Activated CD4-positive, alpha-beta T cell treated with anti-CD3 and anti-CD28 coated beads, Interleukin-2, amount 10 ng/mL, durations not matched to agents 24 days and 14 days (primary cell): ENCODE measurements at regions of chr17 and their contacts with region 1.

Region 1: GRCh38 chr17:36641877-36642845 is 40.8 kb downstream of the MRM1 start:
- DNase-seq: peak; percentile 67
- H3K4me3 Mint-ChIP-seq: peak overlapping the region; percentile 86
- H3K27ac Mint-ChIP-seq: peak overlapping the region; percentile 45
- H3K4me1 Mint-ChIP-seq: peaks cover 9% of the 10 kb centered on the region
- H3K27me3 Mint-ChIP-seq: peaks cover 81% of the 10 kb centered on the region

Region 2: GRCh38 chr17:36443777-36444176 is 198.4 kb before region 1 on chr17:
- intact Hi-C with region 1: no loop called
- DNase-seq: no peak
- H3K4me3 Mint-ChIP-seq: no peak overlapping the region
- H3K27ac Mint-ChIP-seq: no peak overlapping the region
- H3K4me1 Mint-ChIP-seq: no peaks in the 10 kb centered on the region
- H3K27me3 Mint-ChIP-seq: no peaks in the 10 kb centered on the region

Region 3: DNA sequence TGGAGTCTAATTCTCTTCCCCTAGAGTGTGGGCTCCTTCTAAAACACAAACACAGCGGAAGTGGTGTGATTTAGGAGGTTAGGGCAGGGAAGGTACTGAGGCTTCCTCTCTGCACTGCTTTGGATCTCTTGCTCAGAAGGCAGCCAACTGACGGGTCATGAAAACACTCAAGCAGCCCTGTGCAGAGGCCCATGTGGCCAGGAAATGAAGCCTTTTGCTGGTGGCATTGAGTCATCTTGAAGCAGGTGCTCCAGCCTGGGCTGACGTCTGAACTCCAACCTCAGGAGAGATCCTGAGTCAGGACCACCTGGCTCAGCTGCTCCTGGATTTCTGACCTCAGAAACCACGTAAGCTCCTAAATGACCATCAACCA is 32.1 kb after region 1 on chr17:
- intact Hi-C with region 1: no loop called
- DNase-seq: peak; percentile 90
- H3K4me3 Mint-ChIP-seq: peak overlapping the region; percentile 69
- H3K27ac Mint-ChIP-seq: peak overlapping the region; percentile 96
- H3K4me1 Mint-ChIP-seq: peaks cover 51% of the 10 kb centered on the region
- H3K27me3 Mint-ChIP-seq: no peaks in the 10 kb centered on the region

Region 4: GRCh38 chr17:36705874-36706731 is 63.9 kb after region 1 on chr17:
- intact Hi-C with region 1: loop called (anchors 5 kb)
- DNase-seq: peak; percentile 86
- H3K4me3 Mint-ChIP-seq: no peak overlapping the region
- H3K27ac Mint-ChIP-seq: no peak overlapping the region
- H3K4me1 Mint-ChIP-seq: no peaks in the 10 kb centered on the region
- H3K27me3 Mint-ChIP-seq: peaks cover 34% of the 10 kb centered on the region

Region 5: DNA sequence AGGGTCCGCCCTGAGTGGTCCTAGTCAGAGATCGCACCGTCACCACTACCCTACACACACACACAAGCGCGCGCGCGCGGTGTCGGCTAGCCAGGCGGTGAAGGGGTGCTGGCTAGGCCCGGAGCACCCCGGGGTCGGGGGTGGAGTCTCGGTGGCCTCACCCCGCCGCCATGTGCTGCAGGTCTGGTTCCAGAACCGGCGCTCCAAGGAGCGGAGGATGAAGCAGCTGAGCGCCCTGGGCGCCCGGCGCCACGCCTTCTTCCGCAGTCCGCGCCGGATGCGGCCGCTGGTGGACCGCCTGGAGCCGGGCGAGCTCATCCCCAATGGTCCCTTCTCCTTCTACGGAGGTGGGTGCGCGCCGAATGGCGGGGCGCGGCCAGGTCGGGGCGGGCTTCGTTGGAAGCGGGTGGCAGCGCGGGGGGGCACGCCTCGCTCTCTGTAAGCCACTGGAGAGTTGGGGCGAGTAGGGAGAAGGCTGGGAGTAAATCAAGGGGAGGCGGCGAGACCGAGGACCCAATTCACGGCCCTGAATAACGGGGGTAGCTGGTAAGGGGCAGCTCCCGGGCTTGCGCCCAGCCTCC is 299.9 kb after region 1 on chr17:
- intact Hi-C with region 1: loop called (anchors 5 kb)
- DNase-seq: peak; percentile 67
- H3K4me3 Mint-ChIP-seq: peak overlapping the region; percentile 2
- H3K27ac Mint-ChIP-seq: peak overlapping the region; percentile 39
- H3K4me1 Mint-ChIP-seq: peaks cover 25% of the 10 kb centered on the region
- H3K27me3 Mint-ChIP-seq: peaks cover 78% of the 10 kb centered on the region